Heart right ventricle (tissue), 16 donors: ENCODE measurements at regions of chr3 and their contacts with region 1.

Region 1: GRCh38 chr3:139389458-139390209 is at the start of gene COPB2:
- DNase-seq: peak; percentile 100
- ATAC-seq: peak; percentile 99 to 100 (median 100)
- H3K4me3 ChIP-seq: peak within 1 kb of the TSS; percentile 77 to 99 (median 84)
- H3K27ac ChIP-seq: peak within 1 kb of the TSS; percentile 83 to 97 (median 94)
- H3K4me1 ChIP-seq: peaks cover 0 to 82% (median 48%) of the 10 kb centered on the region in 9 donors
- H3K27me3 ChIP-seq: no peaks in the 10 kb centered on the region
- CTCF ChIP-seq: no peak
- total RNA-seq, gene COPB2: 51.5 to 79.7 (median 67.4) TPM

Region 2: DNA sequence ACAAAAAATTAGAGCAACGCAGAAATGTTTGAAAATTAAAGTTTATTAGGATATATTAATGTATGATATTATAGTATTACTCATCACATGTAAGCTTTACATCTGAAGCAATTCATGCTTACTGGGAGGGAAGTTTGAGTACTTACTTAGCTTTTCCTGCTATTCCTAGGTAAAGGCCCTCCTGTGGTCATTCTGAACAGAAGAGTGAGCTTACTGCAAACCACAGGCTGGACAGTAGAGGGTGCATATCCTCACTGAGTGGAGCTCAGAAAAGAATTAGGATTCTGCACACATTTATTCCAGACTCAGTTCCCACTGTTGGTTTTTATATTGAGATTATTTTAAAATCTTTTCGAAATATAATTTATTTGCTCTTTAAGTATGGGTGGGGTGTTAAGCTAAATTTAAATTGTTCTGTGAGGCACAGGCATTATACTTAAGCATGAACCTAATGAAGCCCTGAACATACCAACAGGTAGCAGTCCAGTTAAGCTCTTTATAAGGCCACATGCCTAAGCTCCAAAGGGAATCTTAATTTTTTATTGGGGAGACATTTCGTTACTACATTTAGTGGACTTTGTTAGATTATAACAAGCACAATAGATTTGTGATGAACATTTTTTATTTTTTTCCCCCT is 35.6 kb before region 1 on chr3:
- intact Hi-C with region 1: loop called in 3 of 10 experiments (anchors 5 kb)
- DNase-seq: no peak
- ATAC-seq: peak in 4 of 8 donors; percentile 48 to 68 (median 56)
- H3K4me3 ChIP-seq: no peak overlapping the region
- H3K27ac ChIP-seq: no peak overlapping the region
- H3K4me1 ChIP-seq: peaks cover 0 to 6% (median 0%) of the 10 kb centered on the region in 9 donors
- H3K27me3 ChIP-seq: no peaks in the 10 kb centered on the region
- CTCF ChIP-seq: peak in 8 of 9 donors; percentile 7 to 69 (median 50)

Region 3: DNA sequence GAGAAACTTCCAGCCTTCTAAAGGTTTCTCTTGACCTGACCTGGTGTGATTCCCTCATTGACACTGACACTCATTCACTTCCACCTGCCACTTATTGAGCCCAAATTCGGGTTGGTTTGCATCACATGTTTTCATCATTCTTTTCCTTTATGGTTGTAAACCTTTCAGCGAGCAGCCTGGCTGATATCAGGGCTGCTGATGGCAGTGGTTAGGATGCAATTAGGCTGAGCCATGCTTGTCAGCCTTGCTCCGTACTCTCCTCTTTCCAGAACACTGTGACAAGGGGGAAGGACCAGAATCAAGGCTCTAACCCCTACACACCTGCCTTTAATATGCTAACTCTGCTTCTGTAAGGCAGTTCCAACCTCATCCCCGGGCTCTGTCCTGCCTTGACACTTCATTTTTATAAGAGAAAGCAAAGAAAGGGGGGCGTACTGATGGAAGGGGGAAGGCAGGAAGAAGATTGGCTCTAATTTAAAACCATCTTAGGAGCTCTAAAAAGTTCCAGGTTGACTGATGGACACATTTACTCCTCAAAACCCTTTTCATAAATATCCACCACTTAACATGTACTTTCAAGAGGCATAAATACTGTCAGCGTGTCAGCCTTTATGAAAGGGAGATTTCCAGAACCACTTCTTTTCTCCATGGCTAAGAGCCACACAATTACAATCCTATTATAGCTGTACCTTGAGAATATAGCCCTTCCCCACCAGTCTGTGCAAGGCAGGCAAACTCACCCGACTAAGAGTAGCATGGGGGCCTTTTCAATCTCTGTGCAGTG is 282.4 kb after region 1 on chr3:
- intact Hi-C with region 1: no loop called
- DNase-seq: no peak
- ATAC-seq: no peak
- H3K4me3 ChIP-seq: no peak overlapping the region
- H3K27ac ChIP-seq: no peak overlapping the region
- H3K4me1 ChIP-seq: peaks cover 3 to 15% (median 6%) of the 10 kb centered on the region in 9 donors
- H3K27me3 ChIP-seq: no peaks in the 10 kb centered on the region
- CTCF ChIP-seq: no peak